Gastrocnemius medialis (tissue), 4 donors: ENCODE measurements at regions of chr1 and their contacts with region 1.

Region 1: GRCh38 chr1:60281360-60281932 is 207.9 kb upstream of the C1orf87 start:
- DNase-seq: peak; percentile 10 to 22
- ATAC-seq: peak; percentile 58 to 89
- H3K4me3 ChIP-seq: no peak overlapping the region
- H3K27ac ChIP-seq: no peak overlapping the region
- H3K4me1 ChIP-seq: peaks cover 0 to 9% of the 10 kb centered on the region in 2 donors
- H3K27me3 ChIP-seq: no peaks in the 10 kb centered on the region
- CTCF ChIP-seq: peak; percentile 41 to 79 (median 67)
- POLR2A ChIP-seq: no peak

Region 2: GRCh38 chr1:60765204-60765603 is 483.8 kb after region 1 on chr1:
- in situ Hi-C with region 1: no loop called
- intact Hi-C with region 1: loop called (anchors 10 kb)
- DNase-seq: no peak
- ATAC-seq: no peak
- H3K4me3 ChIP-seq: no peak overlapping the region
- H3K27ac ChIP-seq: no peak overlapping the region
- H3K4me1 ChIP-seq: no peaks in the 10 kb centered on the region
- H3K27me3 ChIP-seq: no peaks in the 10 kb centered on the region
- CTCF ChIP-seq: peak in 3 of 5 experiments; percentile 21 to 46 (median 34)
- POLR2A ChIP-seq: no peak